ENCODE measurements at regions of chr17 and their contacts with region 1.

Region 1: DNA sequence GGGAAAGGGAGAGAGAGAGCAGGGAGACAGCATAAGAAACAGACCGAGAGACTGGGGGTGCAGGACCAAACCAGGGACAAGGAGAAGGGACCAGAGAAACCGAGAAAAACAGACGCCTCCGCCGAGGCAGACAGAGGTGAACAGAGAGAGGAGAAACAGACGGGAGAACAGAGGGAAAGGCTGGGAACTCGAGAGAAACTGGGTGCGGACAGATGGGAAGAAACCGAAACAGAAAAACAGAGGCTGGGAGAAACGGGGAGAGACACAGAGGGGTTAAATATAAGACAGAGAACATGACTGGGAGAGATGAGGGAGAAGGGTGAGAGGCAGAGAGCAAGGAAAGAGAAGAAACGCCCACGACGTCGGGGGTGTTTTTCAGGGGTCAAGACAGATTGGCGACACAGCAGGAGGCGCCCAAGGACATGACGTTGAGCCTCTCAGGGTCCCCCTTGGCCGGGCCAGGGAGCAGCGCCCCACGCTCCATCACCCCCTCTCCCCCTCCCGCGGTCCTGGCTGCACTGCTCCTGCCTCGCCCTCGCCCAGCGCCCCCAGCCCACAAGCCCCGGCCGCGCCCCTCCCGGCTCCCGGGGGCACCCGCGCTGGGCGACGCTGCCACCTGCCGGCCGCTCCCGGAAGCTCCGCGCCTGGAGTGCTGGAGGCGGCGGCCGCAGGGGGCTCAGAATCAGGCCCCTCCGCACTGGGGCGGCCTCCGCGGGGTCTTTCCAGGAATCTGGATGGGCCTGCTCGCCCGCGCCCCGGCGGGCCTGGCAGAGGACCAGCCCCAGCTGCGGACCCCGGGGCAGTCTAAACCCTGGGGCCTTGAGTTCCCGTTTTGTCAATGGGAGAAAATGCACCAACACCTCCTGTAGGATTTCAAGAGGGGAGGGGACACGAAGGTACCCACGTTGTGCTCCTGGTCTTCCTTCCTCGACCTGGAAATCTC is 1.3 kb upstream of the TMEM92 start:
- DNase-seq: peak in 1 of 2 donors; percentile 91
- H3K4me3 ChIP-seq: peak overlapping the region; percentile 30
- CTCF ChIP-seq: no peak
- POLR2A ChIP-seq: no peak

Region 2: DNA sequence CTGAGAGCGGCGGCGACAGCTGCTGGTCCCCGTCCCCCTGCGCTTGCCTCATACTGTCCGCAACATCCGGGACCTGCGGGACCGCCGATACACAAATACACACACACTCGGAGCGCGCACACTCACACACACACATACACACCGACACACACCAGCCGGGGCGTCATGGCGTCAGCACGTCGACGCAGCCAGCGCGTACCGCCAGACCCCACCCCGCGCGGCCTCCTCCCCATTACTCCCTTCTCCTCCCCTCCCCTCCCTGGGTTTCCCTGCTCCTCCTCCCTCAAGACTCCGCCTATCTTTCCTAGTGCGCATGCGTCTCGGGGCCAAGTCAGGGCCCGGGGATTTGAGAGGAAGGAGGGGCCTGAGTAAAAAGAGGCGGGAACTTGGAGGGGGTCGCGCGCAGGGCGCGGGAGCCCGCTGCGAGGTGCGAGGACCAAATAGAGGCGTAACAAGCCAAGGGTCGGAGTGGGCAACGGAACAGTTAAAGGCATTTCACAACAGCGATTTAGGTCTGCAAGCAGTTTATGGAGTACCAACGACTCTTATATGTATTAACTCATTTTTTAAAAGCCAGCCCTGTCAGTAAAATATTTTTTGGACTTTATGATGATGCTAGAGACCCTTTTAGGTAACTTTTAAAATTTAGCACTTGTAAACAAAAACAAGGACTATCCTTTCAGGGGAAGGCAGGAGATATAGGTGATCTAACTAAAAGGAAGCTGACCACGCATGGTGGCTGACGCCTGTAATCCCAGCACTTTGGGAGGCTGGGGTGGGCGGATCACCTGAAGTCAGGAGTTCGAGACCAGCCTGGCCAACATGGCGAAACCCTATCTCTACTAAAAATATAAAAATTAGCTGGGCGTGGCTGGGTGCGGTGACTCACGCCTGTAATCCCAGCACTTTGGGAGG is 594.8 kb before region 1 on chr17 and contains the start of gene SPOP:
- intact Hi-C with region 1: no loop called
- DNase-seq: peak; percentile 99 to 100
- H3K4me3 ChIP-seq: peak within 1 kb of the TSS; percentile 54
- CTCF ChIP-seq: no peak
- POLR2A ChIP-seq: no peak
- total RNA-seq, gene SPOP: 35.9 to 74.7 (median 47.3) TPM

Region 3: DNA sequence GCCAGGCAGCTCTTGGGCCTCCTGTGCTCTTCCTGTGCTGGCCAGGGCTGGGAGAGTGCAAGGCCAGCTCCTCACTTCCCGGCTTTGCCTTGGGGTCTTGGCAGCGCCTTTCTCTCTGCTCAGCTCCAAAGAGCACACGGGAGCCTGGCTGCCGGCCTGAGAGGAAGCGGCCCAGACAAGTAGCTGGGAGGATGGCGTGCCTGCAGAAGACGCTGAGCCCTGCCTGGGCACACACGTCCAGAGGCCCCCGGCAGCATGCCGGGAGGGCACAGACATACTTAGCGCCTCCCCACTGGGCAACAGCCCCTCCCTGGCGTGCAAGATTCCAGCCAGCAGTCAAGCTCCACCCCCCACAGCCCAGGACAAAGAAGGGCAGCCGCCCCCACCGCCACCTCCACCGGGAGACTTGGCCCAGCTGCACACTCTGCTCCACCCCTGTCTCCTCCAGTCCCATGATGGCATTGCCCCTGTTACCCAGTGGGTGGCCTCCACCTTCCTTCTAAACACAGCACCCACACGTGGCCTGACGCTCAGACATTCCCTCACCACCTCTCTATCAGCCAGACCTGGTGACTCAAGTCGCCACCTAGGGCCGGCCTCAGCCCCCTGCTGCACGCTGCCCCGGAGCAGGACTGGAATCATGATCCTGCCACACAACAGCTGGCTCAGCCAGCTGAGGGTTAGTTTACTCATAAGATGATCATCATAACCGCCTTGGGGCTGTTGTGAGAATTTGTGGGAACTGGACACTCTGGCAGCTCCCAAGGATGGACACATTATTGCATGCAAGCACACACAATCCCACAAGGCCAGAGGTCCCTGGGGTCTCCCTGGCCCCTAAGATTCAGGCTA is 94.8 kb before region 1 on chr17:
- intact Hi-C with region 1: no loop called
- DNase-seq: no peak
- H3K4me3 ChIP-seq: no peak overlapping the region
- CTCF ChIP-seq: peak in 1 of 3 donors; percentile 45
- POLR2A ChIP-seq: no peak

Region 4: DNA sequence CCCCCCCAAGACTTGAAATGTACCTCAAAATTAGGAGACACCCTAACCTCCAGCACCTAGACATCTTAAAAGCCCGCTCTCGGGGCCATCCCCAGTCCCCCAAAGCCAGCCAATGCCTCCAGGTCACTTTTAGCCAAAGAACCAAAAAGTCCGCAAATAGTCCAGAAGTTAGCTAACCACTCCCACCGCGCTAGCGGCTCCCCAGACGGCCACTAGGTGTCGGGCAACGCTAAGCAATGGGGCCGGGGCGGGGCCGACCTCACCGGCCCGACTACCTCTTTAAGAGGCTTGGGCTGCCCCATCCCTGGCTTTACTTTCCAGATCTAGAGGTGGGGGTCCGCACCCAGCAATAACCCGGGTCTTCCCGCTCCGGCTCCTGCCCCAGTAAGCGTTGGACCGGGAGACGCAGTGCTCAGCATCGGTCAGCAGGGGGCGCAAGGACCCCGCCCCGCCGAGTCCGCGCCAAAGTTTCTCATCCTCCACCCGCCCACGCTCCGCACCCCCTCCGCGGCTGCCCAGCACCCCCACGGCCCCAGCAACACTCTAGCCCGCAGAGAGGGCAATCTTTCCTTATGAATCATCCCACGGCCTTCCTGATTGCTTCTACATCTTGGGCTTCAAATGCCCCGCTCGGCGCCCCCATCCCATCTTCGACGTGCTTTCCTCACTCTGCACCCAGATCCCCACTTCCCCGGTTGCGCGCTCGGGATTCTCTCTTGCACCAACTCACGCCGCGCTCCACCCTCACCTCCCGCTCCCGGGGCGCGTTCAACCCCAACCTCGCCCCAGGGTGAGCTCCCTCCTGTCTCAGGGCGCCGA is 72.3 kb before region 1 on chr17:
- intact Hi-C with region 1: loop called (anchors 2 kb)
- DNase-seq: peak; percentile 92 to 98
- H3K4me3 ChIP-seq: peak overlapping the region; percentile 41
- CTCF ChIP-seq: peak in 2 of 3 donors; percentile 80 to 100
- POLR2A ChIP-seq: no peak